CD8-positive, alpha-beta T cell (primary cell): ENCODE measurements at regions of chr22 and their contacts with region 1.

Region 1: GRCh38 chr22:46122511-46122971 is 27.8 kb upstream of the PPARA start:
- DNase-seq: peak; percentile 39 to 77 (median 66)
- ATAC-seq: peak; percentile 79
- H3K4me3 ChIP-seq: no peak overlapping the region
- H3K4me3 Mint-ChIP-seq: no peak overlapping the region
- H3K27ac ChIP-seq: no peak overlapping the region
- H3K27ac Mint-ChIP-seq: no peak overlapping the region
- H3K4me1 ChIP-seq: no peaks in the 10 kb centered on the region
- H3K4me1 Mint-ChIP-seq: no peaks in the 10 kb centered on the region
- H3K27me3 ChIP-seq: no peaks in the 10 kb centered on the region
- H3K27me3 Mint-ChIP-seq: no peaks in the 10 kb centered on the region
- CTCF ChIP-seq: peak; percentile 91

Region 2: GRCh38 chr22:46150034-46150654 is 27.6 kb after region 1 on chr22 and contains the start of gene PPARA:
- CTCF ChIA-PET with region 1: interaction called, 3 read pairs
- POLR2A ChIA-PET with region 1: interaction called, 4 read pairs
- intact Hi-C with region 1: loop called in 1 of 2 experiments (anchors 2 kb)
- DNase-seq: peak; percentile 60 to 93 (median 89)
- ATAC-seq: peak; percentile 77
- H3K4me3 ChIP-seq: peak within 1 kb of the TSS; percentile 82 to 91
- H3K4me3 Mint-ChIP-seq: peak within 1 kb of the TSS; percentile 83
- H3K27ac ChIP-seq: peak within 1 kb of the TSS; percentile 46 to 60
- H3K27ac Mint-ChIP-seq: peak within 1 kb of the TSS; percentile 89
- H3K4me1 ChIP-seq: peaks cover 21% of the 10 kb centered on the region
- H3K4me1 Mint-ChIP-seq: peaks cover 20% of the 10 kb centered on the region
- H3K27me3 ChIP-seq: no peaks in the 10 kb centered on the region
- H3K27me3 Mint-ChIP-seq: no peaks in the 10 kb centered on the region
- CTCF ChIP-seq: no peak
- total RNA-seq, gene PPARA: 4.4 to 6.9 TPM

Region 3: GRCh38 chr22:46309526-46310085 is 187.1 kb after region 1 on chr22:
- CTCF ChIA-PET with region 1: interaction called, 122 read pairs
- POLR2A ChIA-PET with region 1: no interaction called
- intact Hi-C with region 1: loop called in 1 of 2 experiments (anchors 1 kb)
- DNase-seq: no peak
- ATAC-seq: no peak
- H3K4me3 ChIP-seq: no peak overlapping the region
- H3K4me3 Mint-ChIP-seq: no peak overlapping the region
- H3K27ac ChIP-seq: no peak overlapping the region
- H3K27ac Mint-ChIP-seq: no peak overlapping the region
- H3K4me1 ChIP-seq: no peaks in the 10 kb centered on the region
- H3K4me1 Mint-ChIP-seq: no peaks in the 10 kb centered on the region
- H3K27me3 ChIP-seq: no peaks in the 10 kb centered on the region
- H3K27me3 Mint-ChIP-seq: no peaks in the 10 kb centered on the region
- CTCF ChIP-seq: no peak

Region 4: DNA sequence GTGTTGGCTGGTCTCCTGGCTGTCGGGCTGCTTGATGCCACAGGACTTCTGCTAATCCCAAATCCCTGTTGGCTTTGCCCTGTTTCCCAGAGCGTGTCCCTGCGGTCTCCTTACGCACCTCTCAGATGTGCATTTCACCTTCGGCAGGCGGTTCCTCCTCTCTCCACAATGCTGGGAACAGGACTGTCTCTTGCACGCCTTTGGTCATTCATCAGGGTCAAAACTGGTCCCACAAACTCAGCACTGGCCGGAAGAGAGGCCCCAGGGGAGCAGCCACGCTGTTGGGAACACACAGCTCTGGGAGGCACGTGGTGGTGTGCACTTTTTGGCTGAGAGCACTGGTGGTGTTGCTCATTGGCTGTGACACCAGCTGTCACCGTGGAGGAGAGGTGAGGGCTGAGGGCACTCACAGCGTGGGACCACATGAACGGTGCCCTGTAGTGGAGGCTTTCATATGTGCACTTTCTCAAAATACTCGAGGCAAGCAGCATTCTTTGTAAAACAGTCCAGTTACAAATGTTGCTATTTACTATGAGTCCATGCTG is 197.7 kb after region 1 on chr22:
- CTCF ChIA-PET with region 1: interaction called, 122 read pairs
- POLR2A ChIA-PET with region 1: no interaction called
- intact Hi-C with region 1: no loop called
- DNase-seq: no peak
- ATAC-seq: no peak
- H3K4me3 ChIP-seq: no peak overlapping the region
- H3K4me3 Mint-ChIP-seq: no peak overlapping the region
- H3K27ac ChIP-seq: no peak overlapping the region
- H3K27ac Mint-ChIP-seq: no peak overlapping the region
- H3K4me1 ChIP-seq: no peaks in the 10 kb centered on the region
- H3K4me1 Mint-ChIP-seq: no peaks in the 10 kb centered on the region
- H3K27me3 ChIP-seq: no peaks in the 10 kb centered on the region
- H3K27me3 Mint-ChIP-seq: no peaks in the 10 kb centered on the region
- CTCF ChIP-seq: no peak

Region 5: GRCh38 chr22:46542011-46542985 is 419.8 kb after region 1 on chr22:
- CTCF ChIA-PET with region 1: interaction called, 14 read pairs
- POLR2A ChIA-PET with region 1: no interaction called
- intact Hi-C with region 1: loop called in 1 of 2 experiments (anchors 1 kb)
- DNase-seq: peak; percentile 51 to 84 (median 72)
- ATAC-seq: peak; percentile 100
- H3K4me3 ChIP-seq: no peak overlapping the region
- H3K4me3 Mint-ChIP-seq: no peak overlapping the region
- H3K27ac ChIP-seq: no peak overlapping the region
- H3K27ac Mint-ChIP-seq: no peak overlapping the region
- H3K4me1 ChIP-seq: no peaks in the 10 kb centered on the region
- H3K4me1 Mint-ChIP-seq: peaks cover 7% of the 10 kb centered on the region
- H3K27me3 ChIP-seq: peaks cover 5 to 11% of the 10 kb centered on the region in 2 experiments
- H3K27me3 Mint-ChIP-seq: peaks cover 44% of the 10 kb centered on the region
- CTCF ChIP-seq: peak; percentile 79